AG04449 (cell line): ENCODE measurements at regions of chr12 and their contacts with region 1.

Region 1: DNA sequence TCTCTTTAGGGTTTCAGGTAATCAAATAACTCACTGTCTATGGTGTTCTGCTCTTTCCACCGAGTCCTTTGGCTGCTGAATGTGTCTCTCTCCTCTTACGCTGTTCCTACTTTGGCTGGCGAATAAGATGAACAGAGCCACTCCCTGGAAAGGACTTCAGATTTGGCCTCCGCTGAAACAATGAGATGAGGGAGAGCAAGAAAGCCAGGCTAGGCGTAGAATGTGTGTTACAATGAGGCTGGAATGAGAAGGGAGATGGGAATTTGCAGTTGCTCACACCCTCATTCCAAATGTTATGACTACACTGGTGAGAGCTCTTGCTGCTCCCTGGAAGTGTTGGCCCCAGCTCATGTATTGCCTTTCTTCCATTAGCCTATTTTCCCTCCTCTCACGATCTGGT is at the start of gene MFAP5:
- DNase-seq: peak; percentile 38
- H3K4me3 ChIP-seq: peak within 1 kb of the TSS; percentile 18
- CTCF ChIP-seq: no peak

Region 2: GRCh38 chr12:8590842-8591550 is 71.6 kb before region 1 on chr12:
- CTCF ChIA-PET with region 1: no interaction called
- POLR2A ChIA-PET with region 1: no interaction called
- DNase-seq: no peak
- H3K4me3 ChIP-seq: no peak overlapping the region
- CTCF ChIP-seq: no peak

Region 3: GRCh38 chr12:8648576-8649205 is 13.9 kb before region 1 on chr12:
- CTCF ChIA-PET with region 1: interaction called, 10 read pairs
- POLR2A ChIA-PET with region 1: interaction called, 4 read pairs
- DNase-seq: no peak
- H3K4me3 ChIP-seq: no peak overlapping the region
- CTCF ChIP-seq: no peak

Region 4: DNA sequence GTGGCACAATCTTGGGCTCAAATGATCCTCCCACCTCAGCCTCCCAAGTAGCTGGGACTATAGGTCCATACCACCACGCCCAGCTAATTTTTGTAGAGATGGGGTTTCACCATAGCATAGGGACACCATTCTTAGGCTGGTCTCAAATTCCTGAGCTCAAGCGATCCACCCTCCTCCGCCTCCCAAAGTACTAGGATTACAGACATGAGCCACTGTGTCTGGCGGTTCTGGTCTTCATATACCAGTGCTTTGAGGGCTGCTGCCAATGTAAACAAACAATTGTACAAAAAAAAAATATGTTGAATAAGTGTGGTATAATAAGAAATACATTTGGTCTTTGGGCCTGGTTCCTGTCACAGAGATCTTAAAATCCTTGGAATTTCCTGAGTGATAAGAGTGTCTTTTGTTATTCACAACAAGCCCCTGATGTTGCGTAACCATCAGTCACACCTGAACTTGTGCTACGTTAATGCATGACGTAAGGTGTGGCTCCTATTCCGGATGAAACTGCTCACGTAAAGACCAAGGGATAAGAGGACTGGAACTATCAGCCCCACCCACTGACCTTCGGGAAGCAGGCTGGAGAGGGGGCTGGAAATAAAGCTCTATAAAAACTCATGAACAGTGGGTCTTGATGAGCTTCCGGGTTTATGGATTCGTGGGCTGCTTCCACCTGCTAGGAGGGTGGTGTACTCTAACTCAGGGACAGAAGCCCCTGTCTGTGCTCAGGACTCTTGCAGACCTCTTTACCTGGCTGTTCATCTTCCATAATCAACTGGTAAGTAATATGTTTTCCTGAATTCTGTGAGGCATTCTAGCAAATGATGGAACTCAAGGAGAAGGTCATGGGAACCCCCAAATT is 18.7 kb after region 1 on chr12:
- CTCF ChIA-PET with region 1: interaction called, 12 read pairs
- POLR2A ChIA-PET with region 1: interaction called, 8 read pairs
- DNase-seq: no peak
- H3K4me3 ChIP-seq: no peak overlapping the region
- CTCF ChIP-seq: no peak

Region 5: GRCh38 chr12:8709124-8709830 is 46.7 kb after region 1 on chr12:
- CTCF ChIA-PET with region 1: no interaction called
- POLR2A ChIA-PET with region 1: no interaction called
- DNase-seq: no peak
- H3K4me3 ChIP-seq: no peak overlapping the region
- CTCF ChIP-seq: no peak

Region 6: GRCh38 chr12:8860165-8860961 is 197.8 kb after region 1 on chr12:
- CTCF ChIA-PET with region 1: interaction called, 26 read pairs
- POLR2A ChIA-PET with region 1: no interaction called
- DNase-seq: peak; percentile 5
- H3K4me3 ChIP-seq: no peak overlapping the region
- CTCF ChIP-seq: peak; percentile 60

Region 7: DNA sequence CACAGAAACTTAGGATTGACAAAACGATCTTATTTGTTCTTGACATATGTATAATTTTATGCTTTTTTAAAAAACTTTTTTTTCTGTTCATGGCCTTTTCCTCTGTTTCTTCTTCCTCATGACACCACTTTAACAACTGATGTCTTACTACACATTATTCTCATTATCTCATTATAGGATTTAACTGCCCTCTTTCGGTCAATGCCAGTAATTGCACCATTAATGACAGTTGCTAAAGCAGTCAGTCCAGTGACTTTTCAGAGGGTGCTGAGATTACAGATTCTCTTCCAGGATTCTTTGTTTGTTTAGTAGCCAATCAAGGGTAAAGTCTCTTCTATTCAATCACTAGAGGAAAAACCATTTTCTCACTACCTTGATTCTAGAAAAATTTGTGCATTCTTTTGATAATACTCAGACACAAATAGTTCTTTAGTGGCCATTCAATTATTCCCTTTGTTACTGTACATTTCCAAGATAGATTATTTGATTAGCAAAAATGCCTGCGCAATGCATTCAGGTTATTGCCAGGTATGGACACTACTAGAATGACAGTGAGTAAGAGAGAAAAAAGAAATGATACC is 376.9 kb after region 1 on chr12:
- CTCF ChIA-PET with region 1: interaction called, 13 read pairs
- POLR2A ChIA-PET with region 1: no interaction called
- DNase-seq: no peak
- H3K4me3 ChIP-seq: no peak overlapping the region
- CTCF ChIP-seq: peak; percentile 60

Region 8: GRCh38 chr12:9049520-9050133 is 387.0 kb after region 1 on chr12:
- CTCF ChIA-PET with region 1: interaction called, 52 read pairs
- POLR2A ChIA-PET with region 1: no interaction called
- DNase-seq: no peak
- H3K4me3 ChIP-seq: no peak overlapping the region
- CTCF ChIP-seq: no peak